ENCODE measurements at regions of chr12 and their contacts with region 1.

Region 1: DNA sequence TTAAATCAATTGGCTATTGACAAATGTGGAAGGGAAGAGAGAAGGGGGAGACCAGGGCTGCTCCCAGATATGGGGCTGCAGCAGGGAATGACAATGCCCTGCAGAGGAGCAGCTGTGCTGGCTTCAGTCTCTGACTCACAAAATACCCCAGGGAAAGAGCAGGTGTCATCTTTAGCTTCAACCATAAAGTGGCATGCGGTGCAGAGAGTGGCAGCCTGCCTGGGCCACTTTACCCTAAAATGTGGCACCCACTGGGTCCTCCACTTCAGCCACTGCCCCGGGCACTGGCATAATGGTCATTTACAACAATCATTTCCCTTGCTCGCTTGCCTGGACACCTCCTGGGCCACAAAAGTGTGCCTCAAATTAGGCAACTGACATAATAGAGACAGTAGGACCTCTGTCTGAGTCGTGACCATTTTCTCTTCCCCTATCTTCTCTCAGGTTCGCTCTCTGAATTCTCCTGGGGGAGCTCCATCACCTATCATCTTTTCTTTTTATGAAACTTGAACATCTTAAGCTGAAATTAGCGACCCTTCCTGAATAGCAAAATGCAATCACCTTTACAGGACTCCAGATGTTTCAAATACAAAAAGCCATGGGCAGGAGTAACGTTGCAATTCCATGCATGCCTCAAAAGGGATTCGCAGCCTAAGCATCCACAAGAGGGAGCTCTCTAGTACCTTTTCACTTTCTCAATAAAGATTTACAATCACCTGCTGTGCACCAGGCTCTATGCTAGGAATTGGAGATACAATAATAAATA is 179.9 kb upstream of the ATF7IP start:
- DNase-seq: peak in 1 of 2 experiments; percentile 60
- H3K4me3 ChIP-seq: no peak overlapping the region
- H3K27ac ChIP-seq: no peak overlapping the region
- H3K4me1 ChIP-seq: no peaks in the 10 kb centered on the region; a peak in 1 of 7 replicates
- H3K27me3 ChIP-seq: no peaks in the 10 kb centered on the region
- CTCF ChIP-seq: peak in 2 of 3 experiments; percentile 61 to 78; a peak in 3 of 4 replicates
- EP300 ChIP-seq: no peak
- POLR2A ChIP-seq: no peak
- RAD21 ChIP-seq: peak; percentile 74 to 80

Region 2: DNA sequence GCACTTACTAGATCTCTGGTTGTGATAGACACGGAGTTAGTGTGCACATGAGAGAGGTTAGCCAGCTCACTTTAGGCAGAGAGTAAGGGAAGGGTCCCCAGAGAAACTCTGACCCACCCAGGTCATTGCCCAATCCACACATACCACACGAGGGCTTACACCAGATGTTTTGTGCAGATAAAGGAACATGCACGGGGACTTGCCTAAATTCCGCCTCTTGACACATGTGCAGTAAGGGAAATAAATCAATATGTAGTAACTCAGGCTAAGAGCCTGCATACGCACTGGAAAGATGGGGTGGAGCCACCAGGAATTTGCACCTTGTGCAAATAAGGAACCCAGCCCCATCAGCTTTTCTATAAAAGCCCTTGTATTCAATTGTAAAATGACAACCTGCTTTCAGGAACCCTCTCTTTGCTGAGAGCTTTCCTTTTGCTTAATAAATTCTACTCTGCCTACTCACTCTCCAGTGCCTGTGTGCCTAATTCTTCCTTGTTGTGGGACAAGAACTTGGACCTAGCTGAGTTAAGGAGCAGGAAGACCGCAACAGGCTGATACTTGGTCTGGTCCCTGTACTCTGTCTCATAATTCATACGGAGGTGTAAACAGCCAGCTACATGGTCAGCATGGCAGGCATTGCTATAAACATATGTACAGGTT is 868.9 kb before region 1 on chr12:
- CTCF ChIA-PET with region 1: no interaction called
- POLR2A ChIA-PET with region 1: no interaction called
- DNase-seq: no peak
- H3K4me3 ChIP-seq: no peak overlapping the region
- H3K27ac ChIP-seq: no peak overlapping the region
- H3K4me1 ChIP-seq: peaks cover 1 to 6% (median 4%) of the 10 kb centered on the region in 4 experiments; a peak in 3 of 7 replicates
- H3K27me3 ChIP-seq: no peaks in the 10 kb centered on the region
- CTCF ChIP-seq: no peak
- EP300 ChIP-seq: no peak
- POLR2A ChIP-seq: no peak
- RAD21 ChIP-seq: no peak

Region 3: GRCh38 chr12:13905809-13906208 is 279.8 kb before region 1 on chr12:
- CTCF ChIA-PET with region 1: no interaction called
- POLR2A ChIA-PET with region 1: no interaction called
- DNase-seq: no peak
- H3K4me3 ChIP-seq: no peak overlapping the region
- H3K27ac ChIP-seq: no peak overlapping the region
- H3K4me1 ChIP-seq: no peaks in the 10 kb centered on the region
- H3K27me3 ChIP-seq: no peaks in the 10 kb centered on the region
- CTCF ChIP-seq: peak in 2 of 3 experiments; percentile 29 to 32; a peak in 2 of 4 replicates
- EP300 ChIP-seq: no peak
- POLR2A ChIP-seq: no peak
- RAD21 ChIP-seq: peak; percentile 12 to 56; a peak in 3 of 4 replicates

Region 4: GRCh38 chr12:14175206-14175605 is 10.4 kb before region 1 on chr12:
- CTCF ChIA-PET with region 1: interaction called, 10 read pairs
- POLR2A ChIA-PET with region 1: no interaction called
- DNase-seq: no peak
- H3K4me3 ChIP-seq: no peak overlapping the region
- H3K27ac ChIP-seq: no peak overlapping the region
- H3K4me1 ChIP-seq: peaks cover 0 to 4% (median 0%) of the 10 kb centered on the region in 4 experiments; a peak in 1 of 7 replicates
- H3K27me3 ChIP-seq: no peaks in the 10 kb centered on the region
- CTCF ChIP-seq: no peak
- EP300 ChIP-seq: no peak
- POLR2A ChIP-seq: no peak
- RAD21 ChIP-seq: no peak

Region 5: GRCh38 chr12:14207905-14208551 is 22.4 kb after region 1 on chr12:
- CTCF ChIA-PET with region 1: interaction called, 11 read pairs
- POLR2A ChIA-PET with region 1: no interaction called
- DNase-seq: peak in 1 of 2 experiments; percentile 33
- H3K4me3 ChIP-seq: 0 out of 8 replicates have a peak overlapping the region, but pooled peaks of 1 of the 4 experiments have one; percentile 4
- H3K27ac ChIP-seq: no peak overlapping the region
- H3K4me1 ChIP-seq: peaks cover 2 to 13% (median 6%) of the 10 kb centered on the region in 4 experiments; a peak in 5 of 7 replicates
- H3K27me3 ChIP-seq: no peaks in the 10 kb centered on the region; a peak in 1 of 7 replicates
- CTCF ChIP-seq: no peak
- EP300 ChIP-seq: no peak
- POLR2A ChIP-seq: no peak
- RAD21 ChIP-seq: no peak

Measured in H1 (cell line).